Cardiac septum (tissue), 1 donor: ENCODE measurements at regions of chr2 and their contacts with region 1.

Region 1: GRCh38 chr2:127675331-127676261 is at the start of gene LIMS2:
- DNase-seq: no peak
- total RNA-seq, gene LIMS2: 207 TPM

Region 2: DNA sequence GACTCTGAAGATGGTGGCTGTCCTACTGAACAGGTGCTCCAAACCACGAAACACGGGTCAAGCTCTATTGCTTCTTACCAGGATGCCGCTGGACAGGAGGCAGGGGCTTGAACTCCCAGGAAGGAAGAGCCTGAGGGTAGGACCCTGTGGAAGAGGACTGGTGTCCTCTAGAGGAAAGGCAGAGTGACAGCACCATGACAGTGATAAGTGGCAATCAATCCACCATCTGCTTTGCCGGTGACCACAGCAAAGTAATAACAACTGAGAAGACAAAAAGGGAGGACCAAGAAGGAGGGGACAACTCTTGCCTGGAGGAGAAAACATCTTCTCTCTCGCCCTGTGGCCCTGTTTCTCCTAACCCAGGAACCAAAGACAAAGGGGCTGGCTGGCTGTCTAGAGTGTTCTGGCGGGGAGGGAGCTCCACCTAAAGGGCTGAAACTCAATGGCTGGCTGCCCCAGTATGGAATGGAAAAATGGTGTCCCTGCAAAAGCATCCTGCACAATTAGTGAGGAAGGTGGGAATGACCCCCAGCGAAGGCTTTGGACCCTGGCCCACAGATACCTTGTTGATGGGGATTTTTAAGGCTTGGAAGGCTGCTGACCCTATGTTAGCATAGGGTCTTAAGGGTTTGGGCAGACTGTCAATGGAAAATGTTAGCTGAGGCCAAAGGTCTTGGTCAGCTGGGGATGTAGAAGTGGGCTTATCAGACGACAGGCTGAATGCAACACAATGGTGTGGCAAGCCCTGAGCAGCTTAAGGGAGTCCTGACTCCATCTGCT is 222.0 kb before region 1 on chr2:
- intact Hi-C with region 1: no loop called
- DNase-seq: no peak

Region 3: DNA sequence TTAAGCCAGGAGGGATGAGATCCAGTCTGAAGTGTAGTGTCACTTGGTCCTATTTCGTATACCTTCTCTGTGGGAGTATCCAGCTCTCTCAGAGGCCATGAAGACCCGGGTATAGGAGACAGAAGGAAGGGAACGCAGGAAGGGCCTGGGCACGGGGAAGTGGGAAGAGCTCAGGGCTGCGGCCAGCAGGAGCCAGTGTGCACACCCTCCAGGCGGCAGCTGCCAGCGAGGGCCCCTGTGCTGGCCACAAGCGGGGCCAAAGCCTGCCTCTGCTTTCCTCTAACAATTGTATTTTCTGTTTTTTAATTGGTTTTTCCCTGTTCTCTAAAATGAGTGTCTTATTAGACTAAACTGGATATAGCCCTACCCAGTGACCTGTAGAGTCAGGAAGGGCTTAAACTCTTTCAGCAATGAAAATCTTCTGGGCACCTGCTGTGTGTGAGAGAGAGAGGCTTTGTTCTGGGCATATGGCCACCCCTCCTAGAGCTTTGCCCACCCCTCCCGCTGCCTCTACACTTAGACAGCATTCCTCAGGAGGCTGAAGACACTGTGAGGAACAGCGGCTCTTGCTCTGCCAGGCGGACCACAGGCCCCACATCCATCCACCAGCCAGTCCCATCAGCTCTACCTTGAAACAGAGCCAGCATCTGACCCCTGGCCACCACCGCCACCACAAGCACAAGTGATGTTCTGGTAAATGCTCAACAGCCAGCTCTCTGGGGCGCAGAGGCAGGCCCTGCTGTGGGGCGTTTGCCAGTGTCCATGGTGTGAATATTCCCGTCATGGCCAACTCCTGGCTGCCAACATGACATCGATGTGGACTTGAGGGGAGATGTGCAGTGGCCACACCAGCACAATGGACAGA is 20.2 kb before region 1 on chr2:
- intact Hi-C with region 1: loop called (anchors 2 kb)
- DNase-seq: no peak